ENCODE measurements at regions of chr5 and their contacts with region 1.

Region 1: GRCh38 chr5:68962757-68963484 is 130.9 kb upstream of the SLC30A5 start:
- DNase-seq: peak; percentile 66 to 89 (median 71)
- H3K4me3 ChIP-seq: peak overlapping the region in 1 of 4 donors; percentile 7
- H3K27ac ChIP-seq: no peak overlapping the region
- H3K4me1 ChIP-seq: no peaks in the 10 kb centered on the region
- H3K27me3 ChIP-seq: no peaks in the 10 kb centered on the region
- CTCF ChIP-seq: peak; percentile 76 to 85 (median 79)
- POLR2A ChIP-seq: no peak

Region 2: GRCh38 chr5:68287976-68288706 is 674.8 kb before region 1 on chr5:
- intact Hi-C with region 1: loop called in 1 of 2 experiments (anchors 10 kb)
- DNase-seq: peak; percentile 64 to 87 (median 71)
- H3K4me3 ChIP-seq: peak overlapping the region in 3 of 4 donors; percentile 19 to 47 (median 31)
- H3K27ac ChIP-seq: peak overlapping the region in 4 of 5 donors; percentile 71 to 88 (median 79)
- H3K4me1 ChIP-seq: peaks cover 14 to 61% of the 10 kb centered on the region in 2 donors
- H3K27me3 ChIP-seq: no peaks in the 10 kb centered on the region
- CTCF ChIP-seq: no peak
- POLR2A ChIP-seq: peak in 1 of 2 donors; percentile 66

Region 3: DNA sequence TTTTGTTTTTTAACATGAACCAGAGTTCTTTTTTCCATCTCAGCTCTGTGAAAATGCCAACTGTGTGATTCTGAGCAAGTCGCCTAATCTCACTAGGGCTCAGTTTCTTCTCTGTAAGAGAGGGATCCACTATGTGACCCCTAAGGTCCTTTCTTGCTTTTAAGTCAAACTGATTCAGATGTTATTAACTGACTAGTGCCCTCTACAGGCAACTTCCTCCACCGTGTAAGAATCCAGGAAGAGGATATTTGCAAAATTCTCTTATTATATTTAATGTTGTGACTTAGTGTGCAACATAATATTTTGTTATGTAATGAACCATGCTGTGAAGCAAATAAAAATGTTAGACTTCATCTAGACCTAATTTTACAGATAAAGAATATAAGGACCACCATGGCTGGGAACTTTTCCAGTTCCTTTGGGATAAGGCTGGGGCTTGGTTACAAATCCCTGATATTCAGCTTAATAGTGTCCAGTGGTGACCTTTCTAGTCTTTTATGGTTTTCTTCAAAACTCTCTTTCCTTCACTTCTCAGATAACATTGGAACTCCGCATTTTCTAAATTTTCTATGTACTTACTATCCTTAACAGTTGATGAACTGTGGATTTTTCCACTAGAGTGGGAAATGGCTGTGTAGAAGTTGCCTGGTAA is 502.6 kb before region 1 on chr5:
- intact Hi-C with region 1: loop called in 1 of 2 experiments (anchors 10 kb)
- DNase-seq: peak; percentile 20 to 69 (median 43)
- H3K4me3 ChIP-seq: no peak overlapping the region
- H3K27ac ChIP-seq: no peak overlapping the region
- H3K4me1 ChIP-seq: peaks cover 11 to 13% of the 10 kb centered on the region in 2 donors
- H3K27me3 ChIP-seq: no peaks in the 10 kb centered on the region
- CTCF ChIP-seq: peak; percentile 50 to 75 (median 68)
- POLR2A ChIP-seq: no peak

Measured in adrenal gland (tissue), 19 donors.